ENCODE measurements at regions of chr10 and their contacts with region 1.

Region 1: GRCh38 chr10:89147256-89147655 is 59.9 kb downstream of the CH25H start:
- DNase-seq: no peak
- H3K4me3 ChIP-seq: no peak overlapping the region
- H3K27ac ChIP-seq: no peak overlapping the region
- H3K4me1 ChIP-seq: no peaks in the 10 kb centered on the region
- CTCF ChIP-seq: no peak

Region 2: GRCh38 chr10:89074120-89074519 is 73.1 kb before region 1 on chr10:
- CTCF ChIA-PET with region 1: no interaction called
- POLR2A ChIA-PET with region 1: no interaction called
- intact Hi-C with region 1: no loop called
- DNase-seq: no peak
- H3K4me3 ChIP-seq: no peak overlapping the region
- H3K27ac ChIP-seq: no peak overlapping the region
- H3K4me1 ChIP-seq: no peaks in the 10 kb centered on the region
- CTCF ChIP-seq: no peak

Region 3: DNA sequence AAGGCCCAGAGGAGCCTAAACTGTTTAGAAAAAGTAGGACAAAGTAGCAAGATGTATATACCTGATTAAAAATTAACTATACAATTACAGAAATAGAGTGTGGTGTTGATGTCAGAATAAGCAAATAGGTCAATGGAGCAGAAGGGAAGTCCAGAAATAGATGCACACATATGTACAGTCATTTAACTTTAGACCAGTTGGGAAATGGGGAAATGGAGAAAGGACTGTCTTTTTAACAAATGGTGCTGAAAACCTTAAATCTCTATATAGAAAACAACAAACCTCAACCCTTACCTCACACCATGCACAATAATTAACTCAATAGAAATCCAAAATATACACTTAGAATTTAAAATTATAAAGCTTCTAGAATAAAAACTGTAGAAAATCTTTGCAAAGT is 12.3 kb before region 1 on chr10:
- CTCF ChIA-PET with region 1: no interaction called
- POLR2A ChIA-PET with region 1: interaction called, 10 read pairs
- intact Hi-C with region 1: no loop called
- DNase-seq: no peak
- H3K4me3 ChIP-seq: no peak overlapping the region
- H3K27ac ChIP-seq: no peak overlapping the region
- H3K4me1 ChIP-seq: no peaks in the 10 kb centered on the region
- CTCF ChIP-seq: no peak